ENCODE measurements at regions of chr7 and their contacts with region 1.

Region 1: GRCh38 chr7:99579956-99580777 is 17.9 kb upstream of the TMEM225B start:
- DNase-seq: peak; percentile 32 to 78 (median 58)
- ATAC-seq: peak; percentile 90
- H3K4me3 ChIP-seq: peak overlapping the region; percentile 57
- H3K4me3 Mint-ChIP-seq: peak overlapping the region; percentile 92
- H3K27ac ChIP-seq: no peak overlapping the region
- H3K27ac Mint-ChIP-seq: peak overlapping the region; percentile 73
- H3K4me1 ChIP-seq: peaks cover 14% of the 10 kb centered on the region
- H3K4me1 Mint-ChIP-seq: peaks cover 26% of the 10 kb centered on the region
- H3K27me3 ChIP-seq: no peaks in the 10 kb centered on the region
- H3K27me3 Mint-ChIP-seq: no peaks in the 10 kb centered on the region
- CTCF ChIP-seq: peak; percentile 54

Region 2: DNA sequence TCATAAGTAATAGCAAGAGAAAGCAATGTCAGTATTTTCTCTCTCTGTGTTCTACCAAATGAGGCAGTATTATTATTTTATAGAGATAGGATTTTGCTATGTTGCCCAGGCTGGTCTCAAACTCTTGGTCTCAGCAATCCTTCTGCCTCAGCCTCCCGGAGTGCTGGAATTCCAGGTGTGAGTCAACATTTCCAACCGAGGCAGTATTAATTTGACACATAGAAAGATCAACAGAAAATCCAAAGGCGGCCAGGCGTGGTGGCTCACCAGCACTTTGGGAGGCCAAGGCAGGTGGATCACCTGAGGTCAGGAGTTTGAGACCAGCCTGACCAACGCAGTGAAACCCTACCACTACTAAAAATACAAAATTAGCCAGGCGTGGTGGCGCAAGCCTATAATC is 508.0 kb before region 1 on chr7:
- CTCF ChIA-PET with region 1: no interaction called
- POLR2A ChIA-PET with region 1: no interaction called
- intact Hi-C with region 1: no loop called
- DNase-seq: no peak
- ATAC-seq: no peak
- H3K4me3 ChIP-seq: no peak overlapping the region
- H3K4me3 Mint-ChIP-seq: no peak overlapping the region
- H3K27ac ChIP-seq: no peak overlapping the region
- H3K27ac Mint-ChIP-seq: no peak overlapping the region
- H3K4me1 ChIP-seq: no peaks in the 10 kb centered on the region
- H3K4me1 Mint-ChIP-seq: peaks cover 31% of the 10 kb centered on the region
- H3K27me3 ChIP-seq: no peaks in the 10 kb centered on the region
- H3K27me3 Mint-ChIP-seq: no peaks in the 10 kb centered on the region
- CTCF ChIP-seq: no peak

Region 3: GRCh38 chr7:99543081-99543850 is 36.9 kb before region 1 on chr7:
- CTCF ChIA-PET with region 1: no interaction called
- POLR2A ChIA-PET with region 1: no interaction called
- intact Hi-C with region 1: no loop called
- DNase-seq: no peak
- ATAC-seq: no peak
- H3K4me3 ChIP-seq: no peak overlapping the region
- H3K4me3 Mint-ChIP-seq: no peak overlapping the region
- H3K27ac ChIP-seq: no peak overlapping the region
- H3K27ac Mint-ChIP-seq: no peak overlapping the region
- H3K4me1 ChIP-seq: no peaks in the 10 kb centered on the region
- H3K4me1 Mint-ChIP-seq: no peaks in the 10 kb centered on the region
- H3K27me3 ChIP-seq: no peaks in the 10 kb centered on the region
- H3K27me3 Mint-ChIP-seq: no peaks in the 10 kb centered on the region
- CTCF ChIP-seq: no peak

Region 4: DNA sequence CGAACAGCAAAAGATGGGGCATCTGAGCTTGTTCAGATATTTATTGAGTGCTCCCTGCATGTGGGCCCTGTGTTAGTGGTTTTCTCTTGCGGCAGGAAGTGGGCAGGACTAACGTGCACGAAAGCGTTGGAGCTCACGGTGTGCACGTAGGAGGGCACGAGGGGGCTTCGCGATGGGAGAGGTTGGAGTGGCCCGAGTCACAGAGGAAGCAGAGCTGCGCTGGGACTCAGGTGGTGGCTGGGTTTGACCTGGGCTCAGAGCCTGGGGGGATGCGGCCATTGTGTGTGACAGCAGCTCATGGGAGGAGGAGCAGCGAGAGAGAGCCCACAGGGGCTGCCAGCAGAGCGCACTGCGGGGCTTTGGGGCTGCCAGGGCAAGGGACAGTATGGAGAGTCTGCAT is 44.3 kb after region 1 on chr7:
- CTCF ChIA-PET with region 1: no interaction called
- POLR2A ChIA-PET with region 1: interaction called, 14 read pairs
- intact Hi-C with region 1: no loop called
- DNase-seq: peak; percentile 48 to 91 (median 63)
- ATAC-seq: peak; percentile 96
- H3K4me3 ChIP-seq: peak overlapping the region; percentile 46
- H3K4me3 Mint-ChIP-seq: peak overlapping the region; percentile 85
- H3K27ac ChIP-seq: peak overlapping the region; percentile 66 to 67
- H3K27ac Mint-ChIP-seq: peak overlapping the region; percentile 92
- H3K4me1 ChIP-seq: peaks cover 39% of the 10 kb centered on the region
- H3K4me1 Mint-ChIP-seq: peaks cover 49% of the 10 kb centered on the region
- H3K27me3 ChIP-seq: no peaks in the 10 kb centered on the region
- H3K27me3 Mint-ChIP-seq: no peaks in the 10 kb centered on the region
- CTCF ChIP-seq: no peak